RWPE1 (cell line): ENCODE measurements at regions of chr1 and their contacts with region 1.

Region 1: DNA sequence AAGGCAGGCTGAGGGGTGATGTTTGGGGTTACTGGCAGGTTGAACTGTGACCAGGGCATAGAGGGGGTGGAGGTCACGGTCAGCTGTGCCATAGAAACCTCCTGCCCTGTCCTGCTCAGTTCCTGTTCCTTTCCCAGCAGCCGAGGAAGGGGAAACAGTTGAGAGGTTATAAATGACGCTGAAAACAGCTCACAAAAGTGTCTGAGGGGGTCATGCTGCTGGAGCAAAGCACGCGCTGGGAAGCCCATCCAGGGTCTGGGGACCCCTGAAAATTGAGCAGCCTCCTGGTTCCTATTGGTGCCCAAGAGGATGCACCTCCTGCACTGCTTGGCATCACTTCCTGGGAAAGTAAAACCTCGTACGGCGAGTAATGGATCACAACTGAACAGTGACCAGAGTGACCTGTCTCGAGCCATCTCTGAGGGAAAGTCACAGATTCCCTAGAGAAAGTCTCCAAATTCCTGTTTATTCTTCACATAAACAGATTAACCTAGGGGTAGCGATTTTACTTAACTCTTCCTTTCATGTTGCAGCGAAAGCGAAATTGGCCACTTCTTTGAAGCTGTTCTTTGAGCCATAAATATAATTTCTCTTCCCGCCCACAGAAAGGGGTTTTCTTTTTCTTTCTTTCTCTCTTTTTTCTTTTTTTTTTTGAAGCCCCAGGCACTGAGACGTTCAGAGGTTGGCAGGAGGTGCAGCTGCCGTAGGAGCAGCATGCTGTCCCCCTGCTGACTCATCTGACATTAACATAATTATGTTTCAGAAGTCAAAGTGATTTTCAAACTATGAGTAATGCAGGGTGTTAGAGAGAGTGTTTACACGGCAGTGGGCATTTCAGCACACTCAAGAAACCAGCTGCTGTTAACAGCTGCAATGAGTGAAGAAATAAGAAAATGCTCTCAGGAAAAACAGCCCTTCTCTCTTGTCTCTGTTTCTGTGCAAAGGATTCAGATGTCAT is 41.8 kb upstream of the ATF3 start:
- DNase-seq: peak; percentile 84
- H3K27ac ChIP-seq: peak overlapping the region; percentile 56
- CTCF ChIP-seq: no peak

Region 2: DNA sequence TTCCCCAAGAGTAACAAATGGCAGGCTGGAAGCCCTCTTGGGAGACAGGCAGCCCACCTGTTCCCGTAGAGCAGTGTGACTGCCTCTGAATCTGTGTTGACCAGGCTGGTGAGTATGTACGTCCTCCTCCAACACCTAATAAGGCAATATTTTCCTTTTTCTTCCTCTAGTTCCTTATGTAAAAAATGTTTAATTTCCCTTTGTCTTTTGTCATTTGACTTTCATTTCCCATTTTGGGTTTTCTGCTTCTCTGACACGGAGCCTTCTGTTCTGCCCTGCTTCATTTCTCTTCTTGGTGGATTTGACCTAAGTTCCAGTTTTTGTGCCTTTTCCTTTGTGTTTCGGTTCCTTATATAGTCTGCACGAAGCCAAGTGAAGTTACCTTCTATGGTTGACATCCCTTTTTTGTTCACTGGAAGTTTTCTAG is 24.0 kb before region 1 on chr1:
- CTCF ChIA-PET with region 1: no interaction called
- POLR2A ChIA-PET with region 1: interaction called, 11 read pairs
- DNase-seq: no peak
- H3K27ac ChIP-seq: no peak overlapping the region
- CTCF ChIP-seq: no peak